GM18951 (cell line): ENCODE measurements at regions of chr3 and their contacts with region 1.

Region 1: GRCh38 chr3:67377299-67377698 is 277.1 kb downstream of the SUCLG2 start:
- POLR2A ChIP-seq: no peak

Region 2: DNA sequence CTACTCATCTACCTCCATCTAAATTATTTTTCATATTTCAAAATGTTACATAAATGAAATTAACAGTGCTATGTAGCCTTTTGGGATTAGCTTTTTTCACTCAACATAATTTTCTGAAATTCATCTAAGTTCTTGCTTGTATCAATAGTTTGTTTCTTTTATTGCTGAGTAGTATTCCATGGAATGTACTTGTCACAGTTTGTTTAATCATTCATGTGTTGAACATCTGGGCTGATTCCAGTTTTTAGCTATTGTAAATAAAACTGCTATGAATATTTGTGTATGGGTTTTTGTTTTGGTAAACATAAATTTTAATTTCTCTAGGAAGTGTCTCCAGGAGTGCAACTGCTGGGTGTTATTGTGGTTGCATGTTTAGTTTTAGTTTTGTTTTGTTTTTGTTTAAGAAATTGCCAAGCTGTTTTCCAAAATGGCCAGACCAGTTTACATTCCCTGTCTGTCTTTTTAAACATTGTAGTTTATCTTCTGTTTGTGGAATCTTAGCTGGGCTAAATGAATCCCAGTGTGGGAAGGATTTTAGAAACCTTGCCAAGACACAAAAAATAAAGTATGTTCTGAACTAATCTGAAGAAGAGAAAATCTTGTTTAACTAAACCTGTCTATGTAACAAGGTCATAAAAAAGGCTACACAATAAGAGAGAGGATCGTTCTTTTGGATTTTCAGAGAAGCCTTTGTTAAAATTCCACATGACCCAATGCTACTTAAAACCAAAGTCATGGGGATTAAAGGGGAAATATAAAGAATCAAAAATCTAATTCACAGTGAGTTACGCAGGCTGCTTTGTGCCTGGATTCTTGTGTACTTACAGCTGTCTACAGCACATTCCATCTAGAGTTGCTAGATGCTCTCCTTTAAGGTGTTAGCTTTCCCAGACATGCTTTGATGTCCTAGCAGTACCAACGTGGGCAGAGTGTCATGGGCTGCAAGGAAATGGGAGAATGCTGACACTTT is 406.3 kb after region 1 on chr3:
- in situ Hi-C with region 1: loop called (anchors 10 kb)
- POLR2A ChIP-seq: no peak